ENCODE measurements at regions of chr3 and their contacts with region 1.

Region 1: DNA sequence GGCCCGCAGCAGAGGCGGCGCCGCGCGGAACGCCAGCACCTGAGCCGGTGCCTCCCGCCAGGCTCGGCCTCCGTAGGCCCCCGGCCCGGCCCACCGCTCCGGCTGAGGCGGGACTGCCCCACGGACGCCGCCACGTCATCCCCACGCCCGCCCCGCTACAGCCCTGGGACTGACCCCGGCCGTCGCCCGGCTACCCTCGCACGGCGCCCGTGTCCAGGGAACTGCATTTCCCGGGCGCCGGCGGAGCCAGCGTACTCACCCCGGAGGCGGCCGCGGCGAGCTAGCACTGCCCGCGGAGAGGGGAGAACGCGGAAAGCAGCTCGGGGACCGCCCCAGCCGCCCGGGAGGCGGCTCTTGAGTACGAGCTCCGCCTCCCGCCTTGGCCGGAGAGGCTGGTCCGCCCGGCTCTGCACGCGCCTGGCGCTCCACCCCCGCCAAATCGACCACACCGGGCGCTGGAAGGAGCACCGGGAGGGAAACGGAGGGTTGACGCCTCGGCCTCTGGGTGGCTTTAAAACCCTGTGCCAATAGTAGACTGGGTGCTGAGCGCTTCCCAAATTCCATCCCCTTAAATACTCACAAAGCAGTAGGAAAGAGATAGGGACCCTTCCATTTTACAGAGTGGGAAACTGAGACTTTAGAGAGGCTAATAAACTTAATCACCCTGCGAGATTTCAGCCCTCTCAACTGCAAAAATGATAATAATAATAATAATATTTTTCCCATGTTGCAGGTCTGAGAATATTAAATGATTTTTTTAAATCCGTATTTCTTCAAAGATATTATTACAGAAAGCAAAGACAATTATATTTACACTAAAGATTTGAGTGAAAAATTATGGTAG is at the start of gene B4GALT4:
- DNase-seq: peak; percentile 78
- ATAC-seq: peak; percentile 86
- H3K4me3 Mint-ChIP-seq: peak within 1 kb of the TSS; percentile 87
- H3K27ac Mint-ChIP-seq: peak within 1 kb of the TSS; percentile 82
- H3K4me1 Mint-ChIP-seq: peaks cover 36% of the 10 kb centered on the region
- H3K27me3 Mint-ChIP-seq: no peaks in the 10 kb centered on the region
- CTCF ChIP-seq: no peak
- total RNA-seq, gene B4GALT4: 13.8 and 18.0 TPM in 2 replicates

Region 2: DNA sequence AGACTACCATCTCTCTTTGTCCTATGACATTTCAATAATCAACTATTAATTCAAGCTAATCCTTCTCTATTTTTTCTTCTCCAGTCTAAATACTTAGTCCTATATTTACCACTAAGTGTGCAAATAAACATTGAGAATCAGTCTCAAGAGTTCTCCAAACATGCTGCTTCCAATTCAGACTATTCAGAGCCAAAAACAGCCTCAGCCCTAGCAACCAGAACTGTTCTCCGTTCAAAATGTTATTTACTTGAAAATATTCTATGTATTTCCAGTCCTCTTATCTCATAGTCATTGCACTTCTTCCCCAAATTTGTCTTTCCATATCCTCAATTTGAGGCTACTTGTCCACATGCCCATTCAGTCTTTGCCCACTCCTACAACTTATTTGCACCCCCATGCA is 1011.6 kb before region 1 on chr3:
- CTCF ChIA-PET with region 1: no interaction called
- POLR2A ChIA-PET with region 1: no interaction called
- intact Hi-C with region 1: no loop called
- DNase-seq: no peak
- ATAC-seq: no peak
- H3K4me3 Mint-ChIP-seq: no peak overlapping the region
- H3K27ac Mint-ChIP-seq: no peak overlapping the region
- H3K4me1 Mint-ChIP-seq: no peaks in the 10 kb centered on the region
- H3K27me3 Mint-ChIP-seq: no peaks in the 10 kb centered on the region
- CTCF ChIP-seq: no peak

Region 3: DNA sequence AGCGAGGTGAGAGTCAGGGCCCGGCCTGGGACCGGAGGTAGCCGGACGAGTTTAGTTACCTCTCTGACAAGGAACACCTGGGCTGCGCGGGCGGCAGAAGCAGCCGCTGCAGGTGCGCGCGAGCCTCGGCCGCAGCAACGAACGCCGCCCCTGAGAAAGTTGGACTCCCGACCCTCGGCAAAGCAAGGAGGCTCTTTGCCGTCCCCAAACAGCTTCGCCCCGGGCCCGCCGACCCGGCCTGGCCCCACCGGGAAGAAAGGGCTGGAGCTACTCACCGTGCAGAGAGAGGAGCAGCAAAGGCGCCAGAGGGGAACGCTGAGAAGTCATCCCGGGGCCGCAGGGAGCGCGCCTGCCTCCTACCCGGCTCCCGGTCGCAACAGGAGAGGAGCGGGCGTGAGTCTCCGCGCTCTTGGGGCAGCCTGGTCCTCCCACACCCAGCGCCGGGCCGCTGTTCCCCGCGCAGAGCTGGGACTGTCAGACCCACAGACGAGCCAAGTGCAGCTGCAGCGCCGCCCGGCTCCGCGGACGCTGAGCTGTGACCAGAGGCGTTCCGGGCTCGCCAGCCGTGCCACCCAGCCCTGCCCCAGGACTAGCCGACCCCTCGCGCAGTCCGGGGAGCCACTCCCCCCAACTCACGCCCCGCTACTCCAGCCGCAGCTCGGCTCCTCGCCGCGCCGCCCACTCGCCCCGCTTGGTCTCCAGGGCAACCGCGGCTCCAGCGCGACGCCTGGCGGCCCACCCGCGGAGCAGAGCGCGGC is 206.4 kb before region 1 on chr3 and contains the start of gene IGSF11:
- CTCF ChIA-PET with region 1: interaction called, 6 read pairs
- POLR2A ChIA-PET with region 1: no interaction called
- intact Hi-C with region 1: loop called (anchors 1 kb)
- DNase-seq: peak; percentile 49
- ATAC-seq: peak; percentile 88
- H3K4me3 Mint-ChIP-seq: peak within 1 kb of the TSS; percentile 82
- H3K27ac Mint-ChIP-seq: no peak within 1 kb of the TSS
- H3K4me1 Mint-ChIP-seq: peaks cover 9% of the 10 kb centered on the region
- H3K27me3 Mint-ChIP-seq: peaks cover 40% of the 10 kb centered on the region
- CTCF ChIP-seq: no peak
- total RNA-seq, gene IGSF11: not detected in 2 replicates

Region 4: DNA sequence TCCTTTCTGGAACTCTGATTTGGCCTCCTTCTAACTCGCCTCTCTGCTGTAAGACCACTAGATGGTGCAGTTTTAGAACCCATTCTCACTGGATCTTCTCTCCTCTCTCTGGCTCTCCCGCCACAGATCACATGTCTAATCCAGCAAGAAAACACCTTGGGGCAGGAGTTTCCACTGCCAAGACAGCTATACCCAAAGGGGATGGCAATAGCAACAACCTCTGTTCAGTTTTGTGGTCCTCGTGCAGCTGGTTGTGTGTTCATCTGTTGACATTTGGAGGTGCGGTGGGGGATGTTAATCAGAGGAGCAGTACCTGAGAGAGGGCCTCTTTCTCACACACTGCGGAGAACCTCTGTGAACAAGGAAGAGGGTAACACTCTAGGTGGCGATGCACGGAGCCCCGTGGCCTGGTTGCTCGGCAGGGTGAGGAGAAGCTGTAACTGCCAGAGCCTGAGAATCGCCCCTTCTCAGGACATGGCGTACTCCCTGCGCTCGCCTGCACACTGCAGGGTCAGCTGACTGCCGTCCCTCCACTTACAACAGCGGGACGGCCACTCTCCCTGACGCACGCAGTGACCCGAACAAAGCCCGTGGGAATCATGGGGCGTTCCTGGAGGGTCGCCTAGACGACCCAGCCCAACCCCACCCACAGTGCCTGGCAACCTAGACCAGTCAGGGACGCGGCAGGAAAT is 95.2 kb before region 1 on chr3 and contains the start of gene TEX55:
- CTCF ChIA-PET with region 1: interaction called, 13 read pairs
- POLR2A ChIA-PET with region 1: no interaction called
- intact Hi-C with region 1: loop called (anchors 1 kb)
- DNase-seq: no peak
- ATAC-seq: no peak
- H3K4me3 Mint-ChIP-seq: no peak within 1 kb of the TSS
- H3K27ac Mint-ChIP-seq: no peak within 1 kb of the TSS
- H3K4me1 Mint-ChIP-seq: no peaks in the 10 kb centered on the region
- H3K27me3 Mint-ChIP-seq: no peaks in the 10 kb centered on the region
- CTCF ChIP-seq: no peak
- total RNA-seq, gene TEX55: not detected in 2 replicates

Region 5: DNA sequence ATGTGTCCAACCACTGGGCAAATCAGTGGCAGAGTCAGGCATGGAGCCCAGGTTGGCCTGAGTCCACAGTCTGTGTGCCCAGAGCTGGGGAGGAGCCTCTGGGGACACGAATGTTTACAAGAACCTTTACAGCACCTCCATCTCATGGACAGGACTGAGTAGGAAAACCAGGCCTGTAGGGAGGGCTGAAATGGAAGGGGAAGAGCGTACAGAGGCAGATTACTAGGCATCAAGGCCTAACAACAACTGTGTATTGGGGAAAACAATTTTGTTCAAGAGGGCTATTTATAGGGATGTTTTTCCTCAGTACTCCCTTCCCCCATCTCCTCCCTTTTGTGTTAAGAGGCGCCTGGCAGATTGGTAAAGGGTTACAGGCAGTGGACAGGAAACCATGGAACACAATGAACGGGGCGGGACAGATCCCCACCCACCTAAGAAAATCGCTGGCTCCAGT is 38.3 kb after region 1 on chr3:
- CTCF ChIA-PET with region 1: interaction called, 12 read pairs
- POLR2A ChIA-PET with region 1: no interaction called
- intact Hi-C with region 1: no loop called
- DNase-seq: no peak
- ATAC-seq: no peak
- H3K4me3 Mint-ChIP-seq: no peak overlapping the region
- H3K27ac Mint-ChIP-seq: no peak overlapping the region
- H3K4me1 Mint-ChIP-seq: peaks cover 3% of the 10 kb centered on the region
- H3K27me3 Mint-ChIP-seq: no peaks in the 10 kb centered on the region
- CTCF ChIP-seq: no peak

Region 6: GRCh38 chr3:119322835-119323722 is 82.3 kb after region 1 on chr3:
- CTCF ChIA-PET with region 1: no interaction called
- POLR2A ChIA-PET with region 1: interaction called, 9 read pairs
- intact Hi-C with region 1: loop called (anchors 1 kb)
- DNase-seq: peak; percentile 96
- ATAC-seq: peak; percentile 87
- H3K4me3 Mint-ChIP-seq: peak overlapping the region; percentile 87
- H3K27ac Mint-ChIP-seq: peak overlapping the region; percentile 94
- H3K4me1 Mint-ChIP-seq: peaks cover 59% of the 10 kb centered on the region
- H3K27me3 Mint-ChIP-seq: no peaks in the 10 kb centered on the region
- CTCF ChIP-seq: no peak

Region 7: DNA sequence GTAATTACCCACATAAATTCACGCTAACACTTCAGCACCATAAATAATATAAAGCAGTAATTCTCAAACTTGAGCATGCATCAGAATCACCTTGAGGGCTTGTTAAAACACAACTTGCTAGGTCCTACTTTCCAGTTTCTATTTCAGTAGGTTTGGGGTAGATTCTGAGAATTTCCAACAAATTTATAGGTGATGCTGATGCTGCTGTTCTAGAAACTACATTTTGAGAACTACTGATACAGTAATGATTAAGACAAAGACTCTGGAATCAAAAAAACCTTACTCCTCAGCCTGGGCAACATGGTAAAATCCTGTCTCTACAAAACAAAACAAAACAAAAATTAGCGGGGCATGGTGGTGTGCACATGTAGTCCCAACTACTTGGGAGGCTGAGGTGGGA is 203.8 kb after region 1 on chr3:
- CTCF ChIA-PET with region 1: no interaction called
- POLR2A ChIA-PET with region 1: no interaction called
- intact Hi-C with region 1: no loop called
- DNase-seq: no peak
- ATAC-seq: no peak
- H3K4me3 Mint-ChIP-seq: no peak overlapping the region
- H3K27ac Mint-ChIP-seq: no peak overlapping the region
- H3K4me1 Mint-ChIP-seq: no peaks in the 10 kb centered on the region
- H3K27me3 Mint-ChIP-seq: no peaks in the 10 kb centered on the region
- CTCF ChIP-seq: no peak

Region 8: DNA sequence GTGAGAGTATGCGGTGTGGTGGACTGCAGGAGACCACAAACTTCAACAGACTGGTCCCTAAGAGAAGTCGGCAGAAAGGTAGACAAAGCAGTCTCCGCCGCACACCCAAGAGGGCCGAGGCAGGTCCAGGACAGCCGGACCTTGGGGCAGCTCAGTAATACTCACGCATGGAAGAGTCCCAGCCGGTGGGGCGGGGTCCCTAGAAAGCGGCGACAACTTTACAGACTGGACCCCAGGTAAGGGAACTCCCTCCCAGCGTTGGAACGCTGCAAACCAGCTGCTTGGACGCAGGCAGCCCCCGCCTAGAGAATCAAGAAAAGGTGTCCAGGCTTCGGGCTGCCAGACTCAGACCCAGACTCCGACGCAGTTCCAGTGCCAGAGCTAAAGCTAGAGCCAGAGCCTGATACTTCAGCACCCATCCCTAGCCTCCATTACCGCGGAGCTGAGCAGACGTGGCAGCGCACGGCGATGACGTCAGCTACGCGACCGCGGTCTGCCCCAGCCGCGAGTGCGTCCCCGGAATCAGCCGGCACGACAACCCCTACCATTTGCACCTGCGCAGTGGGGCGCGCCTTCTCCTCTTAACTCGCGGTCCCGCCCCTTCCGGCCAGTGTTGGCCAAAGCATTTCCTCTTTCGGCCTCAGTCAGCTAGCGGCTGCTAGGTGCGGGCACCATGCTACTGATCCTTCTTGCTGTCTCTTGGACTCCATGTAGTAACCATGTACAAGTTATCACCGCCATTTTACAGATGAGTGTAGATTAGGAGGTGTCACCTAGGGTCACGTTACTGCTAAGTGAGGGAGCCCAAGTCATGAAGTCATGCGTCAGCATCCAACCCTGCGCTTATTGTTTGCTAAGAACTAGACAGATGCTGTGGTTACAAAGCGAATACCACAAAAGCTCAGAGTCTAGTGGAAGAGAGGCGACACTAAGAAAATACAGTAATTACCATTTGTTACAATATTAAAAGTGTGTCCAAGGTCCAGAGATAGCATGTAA is 222.7 kb after region 1 on chr3 and contains the start of gene TMEM39A:
- CTCF ChIA-PET with region 1: interaction called, 3 read pairs
- POLR2A ChIA-PET with region 1: interaction called, 10 read pairs
- intact Hi-C with region 1: loop called (anchors 1 kb)
- DNase-seq: peak; percentile 99
- ATAC-seq: peak; percentile 88
- H3K4me3 Mint-ChIP-seq: peak within 1 kb of the TSS; percentile 98
- H3K27ac Mint-ChIP-seq: peak within 1 kb of the TSS; percentile 97
- H3K4me1 Mint-ChIP-seq: peaks cover 34% of the 10 kb centered on the region
- H3K27me3 Mint-ChIP-seq: no peaks in the 10 kb centered on the region
- CTCF ChIP-seq: no peak
- total RNA-seq, gene TMEM39A: 33.7 and 45.6 TPM in 2 replicates

Region 9: GRCh38 chr3:120596116-120596852 is 1355.5 kb after region 1 on chr3 and contains the start of gene NDUFB4:
- CTCF ChIA-PET with region 1: no interaction called
- POLR2A ChIA-PET with region 1: no interaction called
- intact Hi-C with region 1: loop called (anchors 5 kb)
- DNase-seq: peak; percentile 82
- ATAC-seq: peak; percentile 96
- H3K4me3 Mint-ChIP-seq: peak within 1 kb of the TSS; percentile 96
- H3K27ac Mint-ChIP-seq: peak within 1 kb of the TSS; percentile 94
- H3K4me1 Mint-ChIP-seq: peaks cover 11% of the 10 kb centered on the region
- H3K27me3 Mint-ChIP-seq: peaks cover 2% of the 10 kb centered on the region
- CTCF ChIP-seq: no peak
- total RNA-seq, gene NDUFB4: 80.4 and 86.3 TPM in 2 replicates